ENCODE measurements at regions of chr7 and their contacts with region 1.

Region 1: DNA sequence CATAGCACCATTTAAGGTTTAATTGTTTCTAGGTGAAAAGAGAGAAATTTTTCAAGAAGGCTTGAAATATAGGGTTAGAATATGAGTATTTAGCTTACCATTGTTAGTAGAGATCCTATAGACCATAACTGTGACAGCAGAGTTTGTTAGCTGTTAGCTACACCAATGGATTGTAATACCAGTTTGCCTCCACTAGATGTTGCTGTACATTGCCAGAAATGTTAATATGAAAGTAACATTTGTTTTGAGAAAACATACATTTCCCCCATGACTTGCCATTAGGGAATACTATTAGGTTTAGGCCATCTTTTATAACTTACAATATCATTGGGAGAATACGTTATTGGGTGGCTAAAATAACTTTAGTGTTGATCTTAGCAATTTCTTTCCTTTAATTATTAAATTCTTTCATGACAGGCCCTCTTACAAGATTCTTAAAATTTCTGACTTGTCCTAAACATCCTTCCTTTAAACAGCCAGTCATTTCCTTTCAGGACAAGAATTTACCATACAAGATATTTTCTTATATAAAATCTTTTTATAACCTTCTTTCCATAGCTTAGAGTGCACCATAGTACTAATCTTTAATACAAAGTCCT is 39.5 kb downstream of the ZNF117 start:
- DNase-seq: no peak
- ATAC-seq: no peak
- H3K4me3 Mint-ChIP-seq: no peak overlapping the region
- H3K27ac Mint-ChIP-seq: no peak overlapping the region
- H3K4me1 Mint-ChIP-seq: peaks cover 3% of the 10 kb centered on the region
- H3K27me3 Mint-ChIP-seq: peaks cover 28% of the 10 kb centered on the region

Region 2: GRCh38 chr7:64463636-64464378 is 487.5 kb before region 1 on chr7:
- CTCF ChIA-PET with region 1: no interaction called
- POLR2A ChIA-PET with region 1: no interaction called
- intact Hi-C with region 1: no loop called
- DNase-seq: peak; percentile 68
- ATAC-seq: peak; percentile 95
- H3K4me3 Mint-ChIP-seq: peak overlapping the region; percentile 54
- H3K27ac Mint-ChIP-seq: no peak overlapping the region
- H3K4me1 Mint-ChIP-seq: no peaks in the 10 kb centered on the region
- H3K27me3 Mint-ChIP-seq: peaks cover 5% of the 10 kb centered on the region

Region 3: GRCh38 chr7:64636386-64636785 is 315.0 kb before region 1 on chr7:
- CTCF ChIA-PET with region 1: no interaction called
- POLR2A ChIA-PET with region 1: no interaction called
- intact Hi-C with region 1: loop called in 1 of 2 experiments (anchors 5 kb)
- DNase-seq: peak; percentile 46
- ATAC-seq: no peak
- H3K4me3 Mint-ChIP-seq: no peak overlapping the region
- H3K27ac Mint-ChIP-seq: no peak overlapping the region
- H3K4me1 Mint-ChIP-seq: no peaks in the 10 kb centered on the region
- H3K27me3 Mint-ChIP-seq: no peaks in the 10 kb centered on the region

Region 4: GRCh38 chr7:64887756-64888508 is 63.4 kb before region 1 on chr7:
- CTCF ChIA-PET with region 1: interaction called, 5 read pairs
- POLR2A ChIA-PET with region 1: no interaction called
- intact Hi-C with region 1: loop called (anchors 2 kb)
- DNase-seq: peak; percentile 69
- ATAC-seq: peak; percentile 62
- H3K4me3 Mint-ChIP-seq: peak overlapping the region; percentile 74
- H3K27ac Mint-ChIP-seq: no peak overlapping the region
- H3K4me1 Mint-ChIP-seq: peaks cover 14% of the 10 kb centered on the region
- H3K27me3 Mint-ChIP-seq: peaks cover 52% of the 10 kb centered on the region

Region 5: DNA sequence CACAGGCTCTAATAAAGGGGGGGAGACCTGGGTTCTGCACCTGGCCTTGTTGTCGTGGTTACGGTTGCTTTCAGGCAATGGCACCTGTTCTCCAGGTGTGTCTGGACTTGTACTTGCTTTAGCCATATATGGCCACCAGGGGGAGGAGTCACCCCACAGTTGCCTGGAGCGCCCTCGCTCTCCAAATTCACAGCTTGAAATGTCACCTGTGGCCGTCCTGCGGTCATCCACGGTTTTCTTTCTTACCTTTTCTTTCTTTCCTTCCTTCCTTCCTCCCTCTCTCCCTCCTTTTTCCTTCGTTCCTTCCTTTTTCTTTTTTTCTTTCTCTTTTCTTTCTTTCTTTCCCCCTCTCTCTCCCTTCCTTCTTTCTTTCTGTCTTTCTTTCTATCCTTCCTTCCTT is 265.1 kb after region 1 on chr7:
- CTCF ChIA-PET with region 1: no interaction called
- POLR2A ChIA-PET with region 1: no interaction called
- intact Hi-C with region 1: loop called in 1 of 2 experiments (anchors 1 kb)
- DNase-seq: peak; percentile 75
- ATAC-seq: no peak
- H3K4me3 Mint-ChIP-seq: no peak overlapping the region
- H3K27ac Mint-ChIP-seq: no peak overlapping the region
- H3K4me1 Mint-ChIP-seq: no peaks in the 10 kb centered on the region
- H3K27me3 Mint-ChIP-seq: no peaks in the 10 kb centered on the region

Region 6: GRCh38 chr7:65307651-65308299 is 356.4 kb after region 1 on chr7:
- CTCF ChIA-PET with region 1: interaction called, 47 read pairs
- POLR2A ChIA-PET with region 1: no interaction called
- intact Hi-C with region 1: loop called (anchors 1 kb)
- DNase-seq: peak; percentile 52
- ATAC-seq: peak; percentile 69
- H3K4me3 Mint-ChIP-seq: no peak overlapping the region
- H3K27ac Mint-ChIP-seq: no peak overlapping the region
- H3K4me1 Mint-ChIP-seq: no peaks in the 10 kb centered on the region
- H3K27me3 Mint-ChIP-seq: peaks cover 1% of the 10 kb centered on the region